A673 (cell line): ENCODE measurements at regions of chr10 and their contacts with region 1.

Region 1: GRCh38 chr10:84537447-84537931 is 209.1 kb downstream of the CCSER2 start:
- DNase-seq: peak; percentile 76
- H3K4me3 ChIP-seq: no peak overlapping the region
- H3K27ac ChIP-seq: no peak overlapping the region
- H3K4me1 ChIP-seq: peaks cover 8% of the 10 kb centered on the region
- H3K27me3 ChIP-seq: no peaks in the 10 kb centered on the region
- CTCF ChIP-seq: peak; percentile 76

Region 2: DNA sequence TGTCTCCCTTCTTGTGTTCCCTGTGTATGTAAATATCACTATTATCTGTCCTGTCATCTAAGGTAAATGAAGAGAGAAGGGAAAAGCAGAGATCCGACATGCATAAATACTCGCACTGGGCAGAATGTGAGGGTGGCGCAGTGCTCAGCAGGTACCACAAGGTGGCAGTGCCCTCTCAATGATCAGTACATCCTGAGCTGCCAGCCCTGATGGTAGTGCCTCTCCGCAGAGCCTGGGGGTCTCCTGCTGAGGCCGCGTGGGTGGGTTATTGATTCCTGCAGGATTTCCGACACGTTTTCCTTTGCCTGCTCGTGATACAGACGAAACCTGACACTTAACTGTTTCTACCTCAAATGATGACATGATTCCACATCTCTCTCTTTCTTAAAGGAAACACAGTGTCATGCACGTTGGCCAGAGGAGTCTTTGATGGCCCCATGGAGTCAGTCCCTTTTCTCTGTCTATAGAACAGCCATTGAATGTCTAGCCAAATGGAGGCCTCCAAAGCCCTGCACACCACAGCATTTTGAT is 272.8 kb before region 1 on chr10:
- CTCF ChIA-PET with region 1: interaction called, 55 read pairs
- POLR2A ChIA-PET with region 1: no interaction called
- intact Hi-C with region 1: loop called (anchors 1 kb)
- DNase-seq: peak; percentile 83
- H3K4me3 ChIP-seq: no peak overlapping the region
- H3K27ac ChIP-seq: no peak overlapping the region
- H3K4me1 ChIP-seq: no peaks in the 10 kb centered on the region
- H3K27me3 ChIP-seq: peaks cover 8% of the 10 kb centered on the region
- CTCF ChIP-seq: peak; percentile 95

Region 3: GRCh38 chr10:84352251-84352842 is 185.1 kb before region 1 on chr10:
- CTCF ChIA-PET with region 1: interaction called, 4 read pairs
- POLR2A ChIA-PET with region 1: no interaction called
- intact Hi-C with region 1: loop called (anchors 5 kb)
- DNase-seq: peak; percentile 72
- H3K4me3 ChIP-seq: no peak overlapping the region
- H3K27ac ChIP-seq: no peak overlapping the region
- H3K4me1 ChIP-seq: peaks cover 3% of the 10 kb centered on the region
- H3K27me3 ChIP-seq: no peaks in the 10 kb centered on the region
- CTCF ChIP-seq: peak; percentile 82

Region 4: GRCh38 chr10:84375011-84375410 is 162.5 kb before region 1 on chr10:
- CTCF ChIA-PET with region 1: interaction called, 7 read pairs
- POLR2A ChIA-PET with region 1: no interaction called
- intact Hi-C with region 1: loop called (anchors 1 kb)
- DNase-seq: peak; percentile 55
- H3K4me3 ChIP-seq: no peak overlapping the region
- H3K27ac ChIP-seq: no peak overlapping the region
- H3K4me1 ChIP-seq: no peaks in the 10 kb centered on the region
- H3K27me3 ChIP-seq: no peaks in the 10 kb centered on the region
- CTCF ChIP-seq: peak; percentile 80

Region 5: GRCh38 chr10:84429926-84430520 is 107.5 kb before region 1 on chr10:
- CTCF ChIA-PET with region 1: interaction called, 9 read pairs
- POLR2A ChIA-PET with region 1: interaction called, 4 read pairs
- intact Hi-C with region 1: loop called (anchors 2 kb)
- DNase-seq: peak; percentile 58
- H3K4me3 ChIP-seq: no peak overlapping the region
- H3K27ac ChIP-seq: no peak overlapping the region
- H3K4me1 ChIP-seq: peaks cover 8% of the 10 kb centered on the region
- H3K27me3 ChIP-seq: no peaks in the 10 kb centered on the region
- CTCF ChIP-seq: peak; percentile 94

Region 6: DNA sequence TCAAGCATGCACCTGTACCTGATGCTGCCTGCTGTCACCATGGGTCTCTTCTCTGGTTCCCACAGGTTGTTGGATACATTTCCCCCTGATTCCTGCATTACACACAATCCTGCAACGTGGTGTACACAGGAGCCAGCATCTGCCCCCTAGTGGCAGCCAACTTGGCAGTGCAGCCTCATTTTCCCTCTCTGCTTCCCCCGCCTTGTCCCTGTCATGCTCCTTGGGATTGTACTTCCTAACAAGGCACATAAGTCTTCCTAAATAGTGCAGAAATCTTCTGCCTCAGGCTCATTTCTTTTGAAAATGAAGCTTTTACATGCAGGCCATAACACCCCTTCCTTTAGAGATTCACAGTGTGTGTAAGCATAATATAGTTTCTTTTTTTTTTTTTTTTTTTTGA is 178.4 kb after region 1 on chr10:
- CTCF ChIA-PET with region 1: no interaction called
- POLR2A ChIA-PET with region 1: no interaction called
- intact Hi-C with region 1: loop called (anchors 2 kb)
- DNase-seq: peak; percentile 73
- H3K4me3 ChIP-seq: no peak overlapping the region
- H3K27ac ChIP-seq: no peak overlapping the region
- H3K4me1 ChIP-seq: no peaks in the 10 kb centered on the region
- H3K27me3 ChIP-seq: peaks cover 34% of the 10 kb centered on the region
- CTCF ChIP-seq: peak; percentile 90

Region 7: DNA sequence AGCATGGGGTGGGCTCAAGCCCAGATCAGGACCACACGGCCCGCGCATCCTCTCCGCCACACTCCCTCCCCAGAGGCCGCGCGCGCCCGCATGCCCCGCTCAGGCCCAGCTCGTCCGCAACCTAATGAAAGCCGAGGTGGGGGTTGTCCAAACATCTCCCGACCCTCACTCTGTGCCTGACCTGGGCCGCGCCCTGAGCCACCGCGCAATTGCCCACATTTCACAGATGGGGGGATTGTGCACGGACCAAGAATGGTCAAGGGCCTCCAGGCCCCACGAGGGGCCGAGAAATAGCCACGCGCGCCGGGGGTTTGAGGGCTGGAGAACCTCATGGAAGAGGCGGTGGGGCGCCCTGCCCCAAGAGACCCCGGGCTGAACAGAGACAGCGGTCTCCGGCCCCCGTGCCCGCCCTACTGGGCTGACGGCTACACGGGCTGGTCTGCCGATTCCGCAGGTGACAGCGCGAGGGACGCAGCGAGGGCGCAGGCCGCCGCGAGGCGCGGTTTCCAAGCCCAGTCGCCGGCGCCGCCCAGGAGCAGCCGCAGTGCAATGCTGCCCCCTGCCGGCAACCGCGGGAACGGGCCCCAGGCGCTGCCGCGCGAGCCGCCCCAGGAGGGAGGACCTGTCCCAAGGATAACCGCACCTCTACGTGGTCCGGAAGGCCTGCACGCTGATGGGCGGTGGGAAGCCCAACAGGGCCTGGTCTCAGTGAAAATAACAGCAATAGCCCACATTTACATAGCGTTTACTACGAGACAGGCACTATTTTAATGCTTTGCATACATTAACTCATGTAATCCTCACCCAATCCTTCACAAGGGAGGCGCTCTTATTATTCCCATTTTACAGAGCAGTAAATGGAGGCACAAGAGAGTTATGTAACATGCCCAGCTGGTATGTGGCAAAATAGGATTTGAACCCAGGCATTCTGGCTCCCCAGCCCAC is 1839.6 kb after region 1 on chr10:
- CTCF ChIA-PET with region 1: no interaction called
- POLR2A ChIA-PET with region 1: no interaction called
- intact Hi-C with region 1: loop called (anchors 10 kb)
- DNase-seq: peak; percentile 64
- H3K4me3 ChIP-seq: no peak overlapping the region
- H3K27ac ChIP-seq: no peak overlapping the region
- H3K4me1 ChIP-seq: no peaks in the 10 kb centered on the region
- H3K27me3 ChIP-seq: peaks cover 10% of the 10 kb centered on the region
- CTCF ChIP-seq: peak; percentile 80